K562 (cell line): ENCODE measurements at regions of chr3 and their contacts with region 1.

Region 1: DNA sequence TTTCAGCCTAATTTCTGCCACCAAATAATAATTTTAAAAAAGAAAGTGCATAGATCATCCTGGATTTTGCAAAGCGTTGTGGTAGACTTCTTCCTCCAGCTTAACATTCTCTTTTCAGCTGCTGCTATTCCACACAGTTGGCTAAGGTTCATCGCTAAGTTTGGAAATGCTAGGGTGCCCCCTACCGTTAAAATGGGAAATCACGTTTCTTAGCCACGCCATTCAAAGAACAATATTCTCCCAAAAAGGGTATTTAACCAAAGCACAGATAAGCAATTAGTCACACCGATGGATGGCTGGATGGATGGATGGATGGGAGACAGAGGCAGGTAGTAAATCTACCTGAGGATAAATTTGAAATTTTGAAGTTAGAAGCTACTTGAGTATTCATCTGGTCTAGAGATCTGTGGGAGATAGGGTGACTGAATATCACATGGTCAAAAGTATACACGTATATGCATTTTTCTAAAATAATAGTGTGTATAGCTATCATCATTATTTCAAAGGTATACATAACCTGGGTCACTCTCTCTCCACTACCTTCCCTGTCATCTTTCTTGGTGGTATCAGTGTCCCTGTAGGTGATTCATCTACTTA is 67.2 kb downstream of the EFHB start:
- DNase-seq: peak; percentile 52 to 75 (median 59)
- ATAC-seq: peak; percentile 97
- H3K4me3 ChIP-seq: no peak overlapping the region
- H3K27ac ChIP-seq: no peak overlapping the region
- H3K4me1 ChIP-seq: no peaks in the 10 kb centered on the region
- H3K27me3 ChIP-seq: no peaks in the 10 kb centered on the region
- CTCF ChIP-seq: peak; percentile 64 to 95 (median 88)
- EP300 ChIP-seq: no peak
- POLR2A ChIP-seq: no peak
- RAD21 ChIP-seq: peak; percentile 90 to 95

Region 2: GRCh38 chr3:18562364-18563154 is 1304.3 kb before region 1 on chr3:
- CTCF ChIA-PET with region 1: interaction called, 3 read pairs
- POLR2A ChIA-PET with region 1: no interaction called
- in situ Hi-C with region 1: no loop called
- intact Hi-C with region 1: loop called (anchors 10 kb)
- DNase-seq: no peak
- ATAC-seq: no peak
- H3K4me3 ChIP-seq: no peak overlapping the region
- H3K27ac ChIP-seq: no peak overlapping the region
- H3K4me1 ChIP-seq: no peaks in the 10 kb centered on the region
- H3K27me3 ChIP-seq: no peaks in the 10 kb centered on the region
- CTCF ChIP-seq: no peak
- EP300 ChIP-seq: no peak
- POLR2A ChIP-seq: no peak
- RAD21 ChIP-seq: no peak

Region 3: DNA sequence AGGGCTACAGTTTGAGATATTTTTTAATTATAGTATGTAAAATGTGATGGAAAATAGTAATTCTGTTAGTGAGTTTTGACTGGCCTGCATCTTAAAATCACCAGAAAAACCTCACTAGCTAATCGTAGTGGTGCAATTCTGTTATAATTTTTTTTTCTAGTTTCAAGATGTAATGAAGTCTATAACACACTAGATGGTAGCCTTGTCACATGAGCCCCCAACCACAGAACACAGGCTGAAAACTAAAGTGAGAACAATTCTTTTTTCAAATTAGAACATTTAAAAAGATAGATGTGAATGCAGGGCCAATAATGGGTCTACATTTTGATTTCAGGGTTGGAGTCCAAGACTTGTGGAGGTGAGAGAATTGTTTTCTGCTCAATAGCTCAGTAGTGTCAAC is 801.8 kb before region 1 on chr3:
- CTCF ChIA-PET with region 1: no interaction called
- POLR2A ChIA-PET with region 1: no interaction called
- in situ Hi-C with region 1: no loop called
- intact Hi-C with region 1: loop called (anchors 5 kb)
- DNase-seq: no peak
- ATAC-seq: no peak
- H3K4me3 ChIP-seq: no peak overlapping the region
- H3K27ac ChIP-seq: no peak overlapping the region
- H3K4me1 ChIP-seq: no peaks in the 10 kb centered on the region
- H3K27me3 ChIP-seq: no peaks in the 10 kb centered on the region
- CTCF ChIP-seq: no peak
- EP300 ChIP-seq: no peak
- POLR2A ChIP-seq: no peak
- RAD21 ChIP-seq: peak; percentile 38 to 49; a peak in 3 of 4 replicates

Region 4: GRCh38 chr3:19146685-19147650 is 719.9 kb before region 1 on chr3:
- CTCF ChIA-PET with region 1: interaction called, 3 read pairs
- POLR2A ChIA-PET with region 1: no interaction called
- in situ Hi-C with region 1: no loop called
- intact Hi-C with region 1: loop called (anchors 5 kb)
- DNase-seq: peak; percentile 60 to 76 (median 68)
- ATAC-seq: peak; percentile 96
- H3K4me3 ChIP-seq: peak overlapping the region; percentile 51
- H3K27ac ChIP-seq: 0 out of 3 replicates have a peak overlapping the region, but pooled peaks have one; percentile 15
- H3K4me1 ChIP-seq: peaks cover 0 to 16% of the 10 kb centered on the region in 2 experiments; a peak in 2 of 5 replicates
- H3K27me3 ChIP-seq: no peaks in the 10 kb centered on the region
- CTCF ChIP-seq: peak; percentile 13 to 45 (median 41); a peak in 2 of 6 replicates
- EP300 ChIP-seq: no peak
- POLR2A ChIP-seq: no peak
- RAD21 ChIP-seq: peak in 1 of 2 experiments; percentile 27; a peak in 1 of 4 replicates

Region 5: GRCh38 chr3:19348929-19349564 is 517.8 kb before region 1 on chr3:
- CTCF ChIA-PET with region 1: interaction called, 3 read pairs
- POLR2A ChIA-PET with region 1: no interaction called
- in situ Hi-C with region 1: no loop called
- intact Hi-C with region 1: loop called (anchors 1 kb)
- DNase-seq: peak; percentile 16 to 50 (median 40)
- ATAC-seq: peak; percentile 61; the same call in 1 of the 3 replicates
- H3K4me3 ChIP-seq: no peak overlapping the region
- H3K27ac ChIP-seq: no peak overlapping the region
- H3K4me1 ChIP-seq: no peaks in the 10 kb centered on the region
- H3K27me3 ChIP-seq: no peaks in the 10 kb centered on the region
- CTCF ChIP-seq: peak; percentile 48 to 55 (median 50); a peak in 4 of 6 replicates
- EP300 ChIP-seq: no peak
- POLR2A ChIP-seq: no peak
- RAD21 ChIP-seq: peak; percentile 56 to 60

Region 6: GRCh38 chr3:19573644-19574043 is 293.2 kb before region 1 on chr3:
- CTCF ChIA-PET with region 1: no interaction called
- POLR2A ChIA-PET with region 1: no interaction called
- in situ Hi-C with region 1: no loop called
- intact Hi-C with region 1: loop called (anchors 5 kb)
- DNase-seq: no peak
- ATAC-seq: no peak
- H3K4me3 ChIP-seq: no peak overlapping the region
- H3K27ac ChIP-seq: no peak overlapping the region
- H3K4me1 ChIP-seq: no peaks in the 10 kb centered on the region
- H3K27me3 ChIP-seq: no peaks in the 10 kb centered on the region
- CTCF ChIP-seq: no peak
- EP300 ChIP-seq: no peak
- POLR2A ChIP-seq: no peak
- RAD21 ChIP-seq: no peak